Gastrocnemius medialis (tissue), 4 donors: ENCODE measurements at regions of chr15 and their contacts with region 1.

Region 1: DNA sequence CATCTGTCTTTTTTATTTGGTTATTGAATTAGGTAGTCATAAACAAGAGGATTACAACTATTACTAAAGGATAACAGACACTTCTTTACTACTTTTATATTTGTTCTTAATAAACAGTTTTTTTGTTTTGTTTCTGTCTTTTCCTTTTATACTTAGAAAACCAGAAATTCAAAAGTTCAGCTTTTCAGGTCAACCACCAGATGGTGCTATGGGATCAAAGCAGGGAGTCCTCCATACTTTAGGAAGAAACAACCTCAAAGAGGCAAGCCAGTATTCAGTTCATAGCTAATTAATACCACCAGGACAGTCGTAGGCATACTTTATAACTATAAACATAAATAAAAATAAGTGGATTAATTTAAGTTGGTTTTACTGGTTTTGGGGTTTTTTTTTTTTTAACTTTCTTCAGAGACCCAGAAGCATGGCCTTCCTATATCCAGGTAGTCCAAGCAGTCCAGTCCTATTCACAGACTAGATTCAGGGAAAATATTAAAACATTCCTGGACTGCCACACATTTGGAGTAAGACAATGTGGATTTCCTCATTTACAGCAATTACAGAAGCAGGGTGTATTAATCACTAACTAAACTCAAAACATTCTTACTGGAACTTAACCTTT is 16.0 kb upstream of the EID1 start:
- DNase-seq: no peak
- ATAC-seq: peak in 1 of 2 donors; percentile 70
- H3K4me3 ChIP-seq: no peak overlapping the region
- H3K27ac ChIP-seq: no peak overlapping the region
- H3K4me1 ChIP-seq: no peaks in the 10 kb centered on the region
- H3K27me3 ChIP-seq: no peaks in the 10 kb centered on the region
- CTCF ChIP-seq: peak; percentile 69 to 90 (median 77)
- POLR2A ChIP-seq: no peak

Region 2: DNA sequence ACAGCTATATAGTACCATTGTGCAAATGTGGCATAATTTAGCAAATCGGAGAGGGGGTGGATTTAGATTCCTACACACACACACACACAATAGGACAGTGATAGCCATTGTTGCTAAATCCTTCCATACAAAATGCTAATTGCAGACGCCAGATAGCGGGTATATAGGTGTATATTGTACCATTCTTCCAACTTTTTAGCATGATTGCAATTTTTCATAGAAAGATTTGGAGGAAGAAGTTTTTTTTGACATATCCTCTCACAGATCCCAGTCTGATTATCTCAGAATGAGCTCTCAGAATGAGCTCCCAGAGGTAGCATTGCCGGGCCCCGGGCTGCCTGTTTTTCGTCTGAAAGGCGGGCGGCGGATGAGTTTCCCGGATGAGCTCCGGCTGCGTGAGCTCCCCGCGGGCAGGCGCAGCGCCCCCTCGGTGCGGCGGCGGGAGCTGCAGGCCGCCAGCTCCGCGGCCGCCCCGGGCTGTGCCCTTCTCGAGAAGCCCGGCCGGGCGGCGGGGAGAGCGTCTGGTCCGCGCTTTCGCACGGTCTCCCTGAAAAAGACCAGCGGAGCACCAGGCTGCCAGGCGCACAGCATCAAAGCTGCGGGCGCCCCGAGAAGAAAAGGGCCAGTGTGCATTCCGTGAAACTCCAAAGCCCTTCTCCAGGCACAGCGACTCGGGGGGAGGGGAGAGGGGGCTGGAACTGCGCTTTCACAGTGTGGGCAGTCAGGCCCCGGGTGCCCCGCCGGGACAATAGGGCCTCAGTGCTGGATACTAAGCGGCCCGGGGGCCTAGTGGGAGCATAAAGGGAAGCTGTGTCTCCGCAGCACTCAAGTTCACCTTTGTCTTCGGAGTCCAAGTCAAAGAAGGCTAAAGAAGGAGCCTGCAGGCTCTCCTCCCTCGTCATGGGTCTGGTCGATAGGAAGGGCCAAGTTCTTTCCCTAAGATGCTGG is 113.8 kb after region 1 on chr15:
- in situ Hi-C with region 1: loop called in 1 of 4 experiments (anchors 5 kb)
- intact Hi-C with region 1: loop called (anchors 1 kb)
- DNase-seq: peak; percentile 23 to 56
- ATAC-seq: peak; percentile 88 to 97
- H3K4me3 ChIP-seq: peak overlapping the region; percentile 56 to 85 (median 66)
- H3K27ac ChIP-seq: peak overlapping the region in 3 of 4 donors; percentile 12 to 63 (median 58)
- H3K4me1 ChIP-seq: peaks cover 0 to 4% of the 10 kb centered on the region in 2 donors
- H3K27me3 ChIP-seq: no peaks in the 10 kb centered on the region
- CTCF ChIP-seq: peak; percentile 77 to 94 (median 86)
- POLR2A ChIP-seq: no peak

Region 3: DNA sequence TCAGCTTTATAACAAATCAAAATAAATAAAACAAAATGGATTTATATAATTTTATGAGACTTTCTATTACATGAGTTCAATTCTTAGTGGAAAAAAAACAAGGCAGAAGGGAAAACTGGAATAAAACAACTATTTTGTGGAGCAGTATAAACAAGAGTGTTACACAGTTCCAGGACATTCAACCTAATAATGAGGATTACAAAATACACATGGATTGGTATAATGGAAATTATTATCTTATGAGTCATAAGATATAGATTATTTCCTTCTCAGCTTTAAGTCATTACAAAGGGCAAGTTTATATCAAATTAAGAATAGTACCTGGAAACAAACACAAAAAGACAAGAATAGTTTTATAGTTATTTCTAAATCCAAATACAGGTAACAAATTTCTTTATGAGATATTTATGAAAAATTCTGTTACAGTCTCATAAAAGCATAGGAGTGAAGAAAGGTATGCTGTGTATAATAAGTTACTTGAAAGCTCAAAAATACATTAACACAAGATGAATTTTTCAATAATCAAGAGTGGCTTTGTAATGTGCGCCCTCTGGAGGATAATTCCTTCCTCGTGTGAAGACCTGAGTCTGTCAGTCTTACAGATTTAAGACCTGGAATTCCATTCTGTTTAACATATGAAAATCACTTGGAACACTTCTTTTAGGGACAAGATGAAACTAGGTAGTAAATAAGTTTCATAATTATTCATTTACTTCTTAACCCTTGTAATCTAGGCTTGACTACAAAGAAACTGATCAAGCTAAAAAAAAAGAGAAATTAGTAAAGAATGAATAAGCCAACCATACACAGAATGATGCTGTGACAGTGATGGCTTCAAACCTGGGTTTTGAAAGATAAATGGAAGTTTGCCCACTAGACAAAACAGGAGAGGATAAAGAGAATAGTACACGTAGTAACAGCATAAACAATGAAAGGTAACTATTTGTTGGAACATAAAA is 284.0 kb after region 1 on chr15:
- in situ Hi-C with region 1: loop called in 2 of 4 experiments (anchors 5 to 25 kb)
- intact Hi-C with region 1: loop called (anchors 2 kb)
- DNase-seq: no peak
- ATAC-seq: no peak
- H3K4me3 ChIP-seq: no peak overlapping the region
- H3K27ac ChIP-seq: no peak overlapping the region
- H3K4me1 ChIP-seq: peaks cover 35 to 37% of the 10 kb centered on the region in 2 donors
- H3K27me3 ChIP-seq: no peaks in the 10 kb centered on the region
- CTCF ChIP-seq: peak in 4 of 5 experiments; percentile 4 to 61 (median 26)
- POLR2A ChIP-seq: no peak

Region 4: DNA sequence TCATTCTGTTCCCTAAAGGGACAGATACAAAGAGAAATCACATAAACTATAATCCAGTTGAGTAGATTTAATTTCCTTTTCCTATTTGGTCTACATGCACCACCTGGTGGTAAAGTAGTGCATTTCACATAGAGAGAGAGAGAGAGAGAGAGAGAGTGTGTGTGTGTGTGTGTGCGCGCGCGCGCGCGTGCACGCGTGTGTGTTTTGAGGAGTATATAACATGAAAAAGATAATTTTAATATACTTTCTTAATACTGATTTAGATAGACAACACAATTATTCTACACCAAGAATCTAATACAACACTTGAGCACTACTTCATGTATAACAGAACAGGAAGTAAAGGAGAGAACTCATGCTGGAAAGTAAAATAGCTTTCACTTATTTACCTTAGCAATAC is 560.1 kb after region 1 on chr15:
- in situ Hi-C with region 1: loop called (anchors 10 to 25 kb)
- intact Hi-C with region 1: loop called (anchors 5 kb)
- DNase-seq: peak in 1 of 2 donors; percentile 20
- ATAC-seq: peak; percentile 51 to 92
- H3K4me3 ChIP-seq: peak overlapping the region; percentile 30 to 40 (median 38)
- H3K27ac ChIP-seq: peak overlapping the region; percentile 1 to 59 (median 19)
- H3K4me1 ChIP-seq: no peaks in the 10 kb centered on the region
- H3K27me3 ChIP-seq: no peaks in the 10 kb centered on the region
- CTCF ChIP-seq: peak; percentile 81 to 96 (median 82)
- POLR2A ChIP-seq: no peak